ENCODE measurements at regions of chr3 and their contacts with region 1.

Region 1: DNA sequence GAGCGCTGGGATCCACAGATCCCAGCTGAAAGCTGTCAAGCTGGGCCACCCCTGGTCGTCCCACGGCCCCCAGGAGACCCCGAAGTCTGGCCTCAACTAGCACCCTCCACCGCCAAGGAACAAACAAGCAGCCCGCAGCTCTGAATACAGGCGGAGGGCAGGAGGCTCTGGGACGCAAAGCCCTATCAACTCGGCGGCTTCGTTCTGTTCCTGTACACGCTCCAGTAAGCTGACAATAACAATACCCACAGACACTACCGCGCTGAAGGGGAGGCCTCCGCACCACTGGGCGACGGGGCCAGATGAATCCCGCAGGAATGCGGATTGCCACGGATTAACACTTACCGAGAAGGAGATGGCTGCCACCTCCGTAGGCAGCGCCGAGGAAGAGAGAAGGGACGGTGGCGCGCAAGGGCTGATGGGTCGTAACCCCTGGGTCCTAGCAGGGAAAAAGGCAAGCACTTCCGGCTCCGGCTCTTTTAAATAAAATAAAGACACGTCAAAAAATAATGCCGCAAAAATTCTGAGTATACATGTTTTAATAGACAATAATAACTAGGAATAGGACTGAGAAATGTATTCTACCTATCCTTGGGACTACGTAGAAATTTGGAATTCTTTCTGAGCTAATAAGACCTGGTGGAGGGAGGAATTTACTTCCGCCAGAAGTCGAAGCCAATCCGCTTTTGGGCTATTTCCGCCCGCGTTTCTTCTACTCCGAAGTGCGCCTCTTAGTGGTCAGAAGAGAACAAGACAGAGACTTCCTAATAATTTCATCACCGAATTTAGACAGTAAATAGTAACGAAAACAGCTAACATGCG is at the start of gene RPL32:
- DNase-seq: peak; percentile 78
- H3K4me3 Mint-ChIP-seq: peak within 1 kb of the TSS; percentile 97
- H3K27ac Mint-ChIP-seq: peak within 1 kb of the TSS; percentile 99
- H3K4me1 Mint-ChIP-seq: peaks cover 39% of the 10 kb centered on the region
- H3K27me3 Mint-ChIP-seq: peaks cover 2% of the 10 kb centered on the region
- total RNA-seq, gene RPL32: 1,952 and 1,970 TPM in 2 replicates

Region 2: GRCh38 chr3:12135029-12135657 is 706.2 kb before region 1 on chr3:
- intact Hi-C with region 1: loop called (anchors 2 kb)
- DNase-seq: peak; percentile 45
- H3K4me3 Mint-ChIP-seq: no peak overlapping the region
- H3K27ac Mint-ChIP-seq: no peak overlapping the region
- H3K4me1 Mint-ChIP-seq: no peaks in the 10 kb centered on the region
- H3K27me3 Mint-ChIP-seq: peaks cover 14% of the 10 kb centered on the region

Region 3: GRCh38 chr3:12413721-12414255 is 427.6 kb before region 1 on chr3:
- intact Hi-C with region 1: no loop called
- DNase-seq: no peak
- H3K4me3 Mint-ChIP-seq: no peak overlapping the region
- H3K27ac Mint-ChIP-seq: no peak overlapping the region
- H3K4me1 Mint-ChIP-seq: peaks cover 7% of the 10 kb centered on the region
- H3K27me3 Mint-ChIP-seq: peaks cover 5% of the 10 kb centered on the region

Region 4: GRCh38 chr3:12556671-12557472 is 284.5 kb before region 1 on chr3 and contains the start of gene MKRN2:
- intact Hi-C with region 1: loop called (anchors 1 kb)
- DNase-seq: peak; percentile 79
- H3K4me3 Mint-ChIP-seq: peak within 1 kb of the TSS; percentile 91
- H3K27ac Mint-ChIP-seq: peak within 1 kb of the TSS; percentile 88
- H3K4me1 Mint-ChIP-seq: peaks cover 67% of the 10 kb centered on the region
- H3K27me3 Mint-ChIP-seq: peaks cover 27% of the 10 kb centered on the region
- total RNA-seq, gene MKRN2: 28.5 and 28.6 TPM in 2 replicates

Region 5: GRCh38 chr3:12810013-12810780 is 31.2 kb before region 1 on chr3:
- intact Hi-C with region 1: loop called (anchors 1 kb)
- DNase-seq: peak; percentile 86
- H3K4me3 Mint-ChIP-seq: peak overlapping the region; percentile 26
- H3K27ac Mint-ChIP-seq: no peak overlapping the region
- H3K4me1 Mint-ChIP-seq: peaks cover 5% of the 10 kb centered on the region
- H3K27me3 Mint-ChIP-seq: peaks cover 6% of the 10 kb centered on the region

Region 6: DNA sequence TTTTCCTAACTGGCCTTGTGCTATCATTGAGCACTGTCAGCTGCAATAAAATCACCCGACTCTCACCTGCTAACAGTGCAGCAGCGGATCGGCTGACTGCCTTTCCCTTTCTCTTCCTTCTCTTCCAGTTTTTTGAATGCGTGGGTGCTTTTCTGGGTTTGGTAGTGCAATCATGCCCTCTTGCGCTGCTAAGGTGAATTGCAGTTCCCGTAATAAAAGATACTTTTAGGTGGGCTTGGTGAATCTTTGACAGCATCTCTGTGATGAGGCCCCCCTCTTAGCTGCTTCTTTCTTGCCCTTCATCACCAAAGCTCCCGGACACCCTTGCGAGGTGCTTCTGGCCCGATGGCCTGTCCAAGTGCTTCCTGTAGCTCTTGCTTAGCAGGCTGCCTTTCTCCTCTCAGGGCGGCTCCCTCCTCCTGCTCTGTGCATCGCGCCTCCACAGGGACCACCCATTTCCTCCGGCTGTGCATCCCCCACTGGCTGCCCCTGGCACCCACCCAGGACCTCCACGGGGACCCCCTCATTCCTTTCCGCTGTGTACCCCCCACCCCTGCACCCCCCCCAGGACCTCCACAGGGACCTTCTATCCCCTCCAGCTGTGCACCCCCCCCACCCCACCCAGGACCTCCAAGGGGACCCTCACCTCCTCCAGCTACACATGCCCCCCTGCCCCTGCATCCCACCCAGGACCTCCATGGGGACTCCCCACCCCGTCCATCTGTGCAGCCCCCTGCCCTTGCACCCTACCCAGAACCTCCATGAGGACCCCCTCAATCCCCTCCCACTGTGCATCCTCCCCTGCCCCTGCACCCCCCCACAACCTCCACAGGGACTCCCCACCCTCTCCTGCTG is 50.9 kb after region 1 on chr3:
- intact Hi-C with region 1: loop called (anchors 1 kb)
- DNase-seq: peak; percentile 16
- H3K4me3 Mint-ChIP-seq: no peak overlapping the region
- H3K27ac Mint-ChIP-seq: no peak overlapping the region
- H3K4me1 Mint-ChIP-seq: peaks cover 5% of the 10 kb centered on the region
- H3K27me3 Mint-ChIP-seq: peaks cover 39% of the 10 kb centered on the region

Measured in activated T-helper 1 cell treated with anti-CD3 and anti-CD28 coated beads, Interleukin-12 subunit alpha, Interleukin-12 subunit beta, Interleukin-2, Interleukin-4 antibody, amounts not matched to agents 30 ng/mL and 10 ng/mL and 1 ng/mL, durations not matched to agents 14 hours and 24 hours and 36 hours (primary cell).